Heart left ventricle (tissue), 16 donors: ENCODE measurements at regions of chr11 and their contacts with region 1.

Region 1: GRCh38 chr11:22387126-22387525 is 48.9 kb downstream of the SLC17A6 start:
- DNase-seq: no peak
- ATAC-seq: no peak
- H3K4me3 ChIP-seq: no peak overlapping the region
- H3K27ac ChIP-seq: no peak overlapping the region
- H3K4me1 ChIP-seq: no peaks in the 10 kb centered on the region
- H3K27me3 ChIP-seq: peaks cover 0 to 6% (median 0%) of the 10 kb centered on the region in 9 donors
- CTCF ChIP-seq: no peak
- POLR2A ChIP-seq: no peak

Region 2: DNA sequence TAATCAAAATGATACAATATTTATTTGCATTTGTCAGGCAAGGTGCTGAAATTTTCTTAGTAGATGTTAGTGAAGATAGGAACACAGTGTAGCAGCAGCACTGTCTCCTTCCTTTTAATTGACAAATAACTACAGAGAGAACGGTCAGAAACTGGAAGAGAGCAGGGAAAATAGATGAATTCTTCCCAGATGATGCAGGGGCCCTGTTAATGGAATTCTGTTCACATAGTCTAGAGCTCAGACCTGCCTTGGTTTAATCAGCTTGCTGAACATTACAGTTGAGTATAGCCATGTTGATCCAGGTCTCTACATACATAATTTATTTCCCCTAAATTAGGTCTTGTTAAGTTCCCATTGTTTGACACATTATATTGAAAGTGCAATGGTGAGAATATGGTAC is 78.5 kb after region 1 on chr11:
- intact Hi-C with region 1: loop called in 1 of 10 experiments (anchors 2 kb)
- DNase-seq: no peak
- ATAC-seq: no peak
- H3K4me3 ChIP-seq: no peak overlapping the region
- H3K27ac ChIP-seq: no peak overlapping the region
- H3K4me1 ChIP-seq: no peaks in the 10 kb centered on the region
- H3K27me3 ChIP-seq: no peaks in the 10 kb centered on the region
- CTCF ChIP-seq: no peak
- POLR2A ChIP-seq: no peak